Pancreas (tissue), 10 donors: ENCODE measurements at regions of chr18 and their contacts with region 1.

Region 1: GRCh38 chr18:44679056-44679905 is 1.4 kb upstream of the SETBP1 start:
- DNase-seq: peak; percentile 86 to 91 (median 88)
- ATAC-seq: peak; percentile 85 to 94 (median 91)
- H3K4me3 ChIP-seq: peak overlapping the region; percentile 20 to 80 (median 54)
- H3K27ac ChIP-seq: peak overlapping the region; percentile 81 to 100 (median 94)
- H3K4me1 ChIP-seq: peaks cover 4 to 24% (median 20%) of the 10 kb centered on the region in 3 donors
- H3K27me3 ChIP-seq: no peaks in the 10 kb centered on the region
- CTCF ChIP-seq: peak; percentile 10 to 43 (median 41)

Region 2: GRCh38 chr18:44599412-44599811 is 79.9 kb before region 1 on chr18:
- intact Hi-C with region 1: no loop called
- DNase-seq: peak in 3 of 6 donors; percentile 21 to 33 (median 25)
- ATAC-seq: peak; percentile 58 to 83 (median 64)
- H3K4me3 ChIP-seq: no peak overlapping the region
- H3K27ac ChIP-seq: no peak overlapping the region
- H3K4me1 ChIP-seq: no peaks in the 10 kb centered on the region
- H3K27me3 ChIP-seq: no peaks in the 10 kb centered on the region
- CTCF ChIP-seq: no peak

Region 3: GRCh38 chr18:44733069-44733753 is 53.9 kb after region 1 on chr18:
- intact Hi-C with region 1: loop called in 1 of 3 experiments (anchors 10 kb)
- DNase-seq: no peak
- ATAC-seq: peak in 3 of 4 donors; percentile 41 to 72 (median 66)
- H3K4me3 ChIP-seq: no peak overlapping the region
- H3K27ac ChIP-seq: peak overlapping the region in 2 of 4 donors; percentile 34 to 51
- H3K4me1 ChIP-seq: peaks cover 6 to 30% (median 16%) of the 10 kb centered on the region in 3 donors
- H3K27me3 ChIP-seq: no peaks in the 10 kb centered on the region
- CTCF ChIP-seq: no peak

Region 4: GRCh38 chr18:44803019-44803650 is 123.9 kb after region 1 on chr18:
- intact Hi-C with region 1: loop called in 1 of 3 experiments (anchors 10 kb)
- DNase-seq: peak in 4 of 6 donors; percentile 37 to 70 (median 59)
- ATAC-seq: peak; percentile 59 to 77 (median 68)
- H3K4me3 ChIP-seq: no peak overlapping the region
- H3K27ac ChIP-seq: peak overlapping the region; percentile 39 to 80 (median 54)
- H3K4me1 ChIP-seq: peaks cover 31 to 62% (median 50%) of the 10 kb centered on the region in 3 donors
- H3K27me3 ChIP-seq: no peaks in the 10 kb centered on the region
- CTCF ChIP-seq: no peak

Region 5: DNA sequence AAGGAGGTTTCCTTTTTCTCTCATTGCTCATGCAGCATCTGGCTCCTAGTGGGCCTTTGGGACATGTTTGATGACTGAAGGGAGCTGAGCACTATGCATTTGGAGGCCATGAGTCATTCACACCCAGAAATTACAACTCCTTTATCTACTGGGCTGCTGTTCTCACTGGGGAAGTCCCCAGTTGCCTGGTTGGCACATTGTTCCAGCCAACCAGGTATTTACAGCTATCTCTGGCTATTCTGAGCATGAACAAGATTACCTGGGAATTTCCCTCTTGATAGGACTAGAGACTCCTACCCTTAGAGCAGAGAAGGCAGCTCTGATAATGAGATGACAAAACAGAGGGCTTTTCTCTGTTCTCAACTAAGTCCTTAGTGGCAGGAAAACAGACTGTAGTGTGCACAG is 207.9 kb after region 1 on chr18:
- intact Hi-C with region 1: loop called in 1 of 3 experiments (anchors 10 kb)
- DNase-seq: peak in 4 of 6 donors; percentile 42 to 73 (median 71)
- ATAC-seq: peak; percentile 93 to 96 (median 94)
- H3K4me3 ChIP-seq: no peak overlapping the region
- H3K27ac ChIP-seq: peak overlapping the region; percentile 12 to 73 (median 46)
- H3K4me1 ChIP-seq: peaks cover 26 to 44% (median 32%) of the 10 kb centered on the region in 3 donors
- H3K27me3 ChIP-seq: no peaks in the 10 kb centered on the region
- CTCF ChIP-seq: no peak

Region 6: GRCh38 chr18:45221363-45221762 is 542.1 kb after region 1 on chr18:
- intact Hi-C with region 1: loop called in 1 of 3 experiments (anchors 10 kb)
- DNase-seq: no peak
- ATAC-seq: no peak
- H3K4me3 ChIP-seq: no peak overlapping the region
- H3K27ac ChIP-seq: no peak overlapping the region
- H3K4me1 ChIP-seq: no peaks in the 10 kb centered on the region
- H3K27me3 ChIP-seq: no peaks in the 10 kb centered on the region
- CTCF ChIP-seq: no peak